MCF 10A (cell line): ENCODE measurements at regions of chr3 and their contacts with region 1.

Region 1: GRCh38 chr3:99638167-99638948 is at the start of gene COL8A1:
- DNase-seq: peak; percentile 81
- H3K4me3 Mint-ChIP-seq: peak within 1 kb of the TSS; percentile 85
- H3K27ac Mint-ChIP-seq: peak within 1 kb of the TSS; percentile 86
- H3K4me1 Mint-ChIP-seq: peaks cover 53% of the 10 kb centered on the region
- H3K27me3 Mint-ChIP-seq: no peaks in the 10 kb centered on the region
- CTCF ChIP-seq: no peak
- total RNA-seq, gene COL8A1: 29.1 and 112 TPM in 2 replicates

Region 2: GRCh38 chr3:99114565-99115291 is 523.6 kb before region 1 on chr3:
- CTCF ChIA-PET with region 1: no interaction called
- POLR2A ChIA-PET with region 1: no interaction called
- intact Hi-C with region 1: loop called (anchors 5 kb)
- DNase-seq: peak; percentile 76
- H3K4me3 Mint-ChIP-seq: no peak overlapping the region
- H3K27ac Mint-ChIP-seq: no peak overlapping the region
- H3K4me1 Mint-ChIP-seq: no peaks in the 10 kb centered on the region
- H3K27me3 Mint-ChIP-seq: no peaks in the 10 kb centered on the region
- CTCF ChIP-seq: peak; percentile 82

Region 3: DNA sequence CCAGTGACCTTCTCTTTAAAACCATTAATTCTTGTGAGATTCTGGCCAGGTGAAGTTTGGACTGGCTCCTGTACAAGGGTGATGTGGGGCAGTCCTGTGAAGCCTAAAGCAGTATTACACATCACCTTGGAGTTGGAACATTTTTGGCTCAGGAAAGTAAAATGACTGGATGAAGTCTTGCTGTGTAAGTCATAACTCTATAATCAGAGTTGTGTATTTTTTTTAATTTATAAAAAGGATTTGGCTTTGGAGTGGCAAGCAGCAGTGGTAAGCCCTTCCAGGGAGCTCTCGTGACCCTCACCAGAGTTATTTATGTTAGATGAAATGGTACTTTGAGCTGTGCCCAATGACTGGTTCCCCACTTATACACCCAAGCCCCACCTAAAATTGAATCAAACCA is 405.7 kb before region 1 on chr3:
- CTCF ChIA-PET with region 1: no interaction called
- POLR2A ChIA-PET with region 1: no interaction called
- intact Hi-C with region 1: no loop called
- DNase-seq: no peak
- H3K4me3 Mint-ChIP-seq: no peak overlapping the region
- H3K27ac Mint-ChIP-seq: no peak overlapping the region
- H3K4me1 Mint-ChIP-seq: peaks cover 6% of the 10 kb centered on the region
- H3K27me3 Mint-ChIP-seq: no peaks in the 10 kb centered on the region
- CTCF ChIP-seq: no peak

Region 4: DNA sequence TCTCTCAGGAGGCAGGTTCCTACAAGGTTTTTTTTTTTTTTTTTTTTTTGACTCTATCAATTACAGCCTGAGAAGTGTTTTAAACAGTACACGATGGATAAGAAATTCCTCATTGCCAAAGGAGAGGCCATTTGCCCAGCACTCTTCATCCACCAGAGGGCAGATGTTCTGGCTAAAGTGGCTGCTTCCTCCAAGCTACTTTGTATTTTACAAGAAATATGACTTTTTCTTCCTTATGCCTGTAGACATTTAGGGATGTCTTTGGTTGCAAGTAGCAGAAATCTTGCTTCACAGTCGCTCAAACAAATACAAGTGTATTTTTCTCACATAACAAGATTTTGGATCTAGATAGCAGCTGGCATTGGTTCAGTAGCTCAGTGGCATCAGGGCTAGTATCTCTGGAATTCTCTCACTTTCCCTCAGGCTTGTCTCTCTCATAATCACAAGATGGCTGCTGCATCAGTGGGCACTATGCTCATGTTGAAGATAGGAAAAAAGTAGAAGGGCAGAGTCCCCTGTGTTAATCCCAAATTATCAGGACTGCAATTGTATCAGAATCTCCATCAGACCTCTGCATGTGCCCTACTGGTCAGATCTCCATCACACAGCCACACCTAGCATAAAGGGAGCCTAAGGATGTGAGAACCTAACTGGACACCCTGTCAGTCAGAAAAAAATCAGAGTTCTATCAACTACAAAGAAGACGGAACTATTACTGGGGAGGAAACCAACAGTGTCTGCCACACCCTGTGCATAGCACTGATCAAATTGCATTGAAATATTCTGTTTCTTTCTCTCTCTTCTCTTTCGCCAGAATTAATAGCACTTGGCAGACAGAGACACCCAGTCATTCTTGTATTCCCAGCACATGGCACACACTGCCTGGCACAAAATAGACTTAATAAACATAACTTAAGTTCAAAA is 138.9 kb before region 1 on chr3:
- CTCF ChIA-PET with region 1: interaction called, 13 read pairs
- POLR2A ChIA-PET with region 1: interaction called, 4 read pairs
- intact Hi-C with region 1: loop called (anchors 1 kb)
- DNase-seq: peak; percentile 70
- H3K4me3 Mint-ChIP-seq: no peak overlapping the region
- H3K27ac Mint-ChIP-seq: no peak overlapping the region
- H3K4me1 Mint-ChIP-seq: peaks cover 28% of the 10 kb centered on the region
- H3K27me3 Mint-ChIP-seq: no peaks in the 10 kb centered on the region
- CTCF ChIP-seq: peak; percentile 61

Region 5: DNA sequence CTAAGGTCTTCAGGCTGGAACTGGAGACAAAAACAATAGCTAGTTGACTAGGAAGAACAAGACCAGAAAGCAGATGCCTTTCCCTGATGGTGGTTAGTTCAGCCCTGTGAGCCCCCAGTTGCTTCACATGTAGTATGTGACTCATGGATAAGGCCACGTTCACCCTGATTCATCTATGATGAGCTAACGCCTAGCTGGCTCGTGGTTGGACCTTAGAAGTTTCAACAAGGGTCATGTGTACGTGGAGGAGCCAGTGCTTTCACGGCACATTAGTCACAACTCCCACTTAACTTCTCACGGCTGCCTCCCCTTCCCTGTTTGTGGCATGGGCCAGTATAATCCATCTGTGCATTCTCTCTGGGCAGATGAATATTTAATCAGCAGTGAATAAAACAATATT is 20.7 kb after region 1 on chr3:
- CTCF ChIA-PET with region 1: interaction called, 21 read pairs
- POLR2A ChIA-PET with region 1: interaction called, 11 read pairs
- intact Hi-C with region 1: no loop called
- DNase-seq: peak; percentile 94
- H3K4me3 Mint-ChIP-seq: no peak overlapping the region
- H3K27ac Mint-ChIP-seq: peak overlapping the region; percentile 63
- H3K4me1 Mint-ChIP-seq: peaks cover 47% of the 10 kb centered on the region
- H3K27me3 Mint-ChIP-seq: no peaks in the 10 kb centered on the region
- CTCF ChIP-seq: no peak

Region 6: GRCh38 chr3:99686955-99687612 is 48.7 kb after region 1 on chr3:
- CTCF ChIA-PET with region 1: interaction called, 209 read pairs
- POLR2A ChIA-PET with region 1: interaction called, 6 read pairs
- intact Hi-C with region 1: loop called (anchors 2 kb)
- DNase-seq: peak; percentile 76
- H3K4me3 Mint-ChIP-seq: no peak overlapping the region
- H3K27ac Mint-ChIP-seq: peak overlapping the region; percentile 71
- H3K4me1 Mint-ChIP-seq: peaks cover 15% of the 10 kb centered on the region
- H3K27me3 Mint-ChIP-seq: no peaks in the 10 kb centered on the region
- CTCF ChIP-seq: peak; percentile 69

Region 7: GRCh38 chr3:100002599-100003350 is 364.4 kb after region 1 on chr3:
- CTCF ChIA-PET with region 1: no interaction called
- POLR2A ChIA-PET with region 1: no interaction called
- intact Hi-C with region 1: no loop called
- DNase-seq: peak; percentile 89
- H3K4me3 Mint-ChIP-seq: peak overlapping the region; percentile 31
- H3K27ac Mint-ChIP-seq: peak overlapping the region; percentile 75
- H3K4me1 Mint-ChIP-seq: peaks cover 60% of the 10 kb centered on the region
- H3K27me3 Mint-ChIP-seq: no peaks in the 10 kb centered on the region
- CTCF ChIP-seq: no peak